ENCODE measurements at regions of chr2 and their contacts with region 1.

Region 1: DNA sequence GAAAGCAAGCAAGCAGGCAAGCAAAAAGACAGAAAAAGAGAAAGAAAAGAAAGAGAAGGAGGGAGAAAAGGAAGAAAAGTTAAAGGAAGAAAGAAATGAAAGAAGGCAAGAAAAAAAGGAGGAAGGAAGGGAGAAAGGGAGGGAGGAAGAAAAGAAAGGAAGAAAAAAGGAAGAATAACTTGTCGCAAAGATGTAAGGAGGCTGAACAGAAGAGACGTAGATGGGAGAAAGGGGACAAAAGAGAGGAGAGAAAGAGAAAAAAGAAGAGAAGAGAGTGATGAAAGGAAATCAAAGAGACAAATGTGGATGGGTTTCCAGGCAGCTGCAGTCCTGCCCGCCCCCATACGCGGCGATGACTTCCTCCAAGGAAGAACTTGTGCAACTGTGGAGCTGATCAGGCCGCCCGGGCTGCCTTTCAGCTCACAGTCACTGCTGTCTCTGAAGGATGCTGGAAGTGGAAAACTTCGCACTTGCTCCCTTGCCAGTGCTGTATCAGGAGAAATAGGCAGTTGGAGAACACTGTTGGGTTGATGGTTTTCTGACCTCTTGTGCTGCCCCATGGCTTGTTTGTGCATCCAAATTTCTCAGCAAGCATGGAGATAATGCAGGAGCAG is 52.9 kb downstream of the TRIB2 start:
- DNase-seq: no peak
- ATAC-seq: no peak
- H3K4me3 ChIP-seq: no peak overlapping the region
- H3K27ac ChIP-seq: no peak overlapping the region
- H3K4me1 ChIP-seq: peaks cover 7% of the 10 kb centered on the region; the same call in 1 of the 2 replicates
- H3K27me3 ChIP-seq: no peaks in the 10 kb centered on the region
- CTCF ChIP-seq: no peak
- EP300 ChIP-seq: no peak
- POLR2A ChIP-seq: no peak
- RAD21 ChIP-seq: no peak

Region 2: DNA sequence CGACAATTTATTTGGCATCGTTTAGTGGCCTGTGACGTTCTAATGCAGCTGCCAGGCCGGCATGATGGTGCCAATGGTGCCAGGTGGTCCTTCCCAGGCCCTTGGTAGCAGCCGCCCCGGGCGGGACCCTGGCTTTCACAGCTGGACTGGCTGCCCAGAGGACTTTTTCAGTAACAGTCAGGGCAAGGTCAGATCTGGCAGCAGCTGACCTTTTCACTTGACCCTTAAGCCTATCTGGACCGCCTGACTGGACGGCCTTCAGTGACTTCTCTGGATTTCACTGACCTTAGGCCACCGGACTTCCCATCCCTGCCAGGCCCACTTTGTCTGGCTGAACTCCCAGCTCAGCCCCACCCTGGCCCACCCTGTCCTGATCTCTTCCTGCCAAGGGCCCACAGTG is 36.9 kb before region 1 on chr2:
- CTCF ChIA-PET with region 1: no interaction called
- POLR2A ChIA-PET with region 1: no interaction called
- in situ Hi-C with region 1: no loop called
- intact Hi-C with region 1: loop called (anchors 1 kb)
- DNase-seq: no peak
- ATAC-seq: no peak
- H3K4me3 ChIP-seq: no peak overlapping the region
- H3K27ac ChIP-seq: no peak overlapping the region
- H3K4me1 ChIP-seq: peaks cover 2% of the 10 kb centered on the region; the same call in 1 of the 2 replicates
- H3K27me3 ChIP-seq: no peaks in the 10 kb centered on the region
- CTCF ChIP-seq: no peak
- EP300 ChIP-seq: no peak
- POLR2A ChIP-seq: no peak
- RAD21 ChIP-seq: no peak